ENCODE measurements at regions of chr4 and their contacts with region 1.

Region 1: DNA sequence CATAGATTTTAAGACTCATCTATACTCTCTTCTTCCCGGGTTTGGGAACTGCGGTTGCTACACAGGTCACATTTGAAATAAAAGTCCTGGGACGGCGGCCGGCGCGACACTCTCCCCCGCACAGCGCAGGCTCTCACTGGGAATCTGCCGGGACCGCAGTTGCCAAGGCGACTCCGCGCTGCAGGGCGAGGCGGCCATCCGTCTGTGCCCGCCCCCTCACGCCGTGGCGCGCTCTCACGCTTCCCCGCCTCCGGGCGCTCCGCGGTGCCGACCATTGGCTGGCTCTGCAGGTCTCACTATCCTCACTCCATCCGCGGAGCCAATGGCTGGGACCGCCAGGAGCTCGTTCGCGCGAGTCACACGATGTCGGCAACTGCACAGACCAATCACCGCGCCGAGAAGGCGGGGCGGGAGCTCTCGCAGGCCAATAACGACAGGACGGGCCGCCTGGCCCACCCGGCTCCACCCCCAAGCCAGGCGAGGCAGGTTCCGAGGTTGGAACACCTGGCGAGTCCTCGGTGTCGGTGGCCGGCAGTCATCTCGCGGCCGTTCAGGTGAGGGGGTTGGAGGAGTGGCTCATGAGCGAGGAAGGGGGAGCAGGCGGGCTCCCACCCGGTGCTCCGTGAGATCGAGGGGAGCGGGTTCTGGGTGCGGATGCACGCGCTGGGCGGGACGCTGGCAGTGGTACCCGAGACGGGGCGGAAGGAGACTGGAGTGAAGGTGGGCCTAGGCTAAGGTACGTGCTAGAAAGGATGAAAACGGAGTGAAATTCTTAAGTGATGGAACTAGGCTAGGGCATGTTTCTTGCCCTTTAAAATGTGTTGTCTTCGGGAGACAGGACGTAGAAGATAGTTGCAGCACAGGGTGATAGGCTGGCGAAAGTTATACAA is at the start of gene MSMO1:
- DNase-seq: peak; percentile 99
- H3K4me3 ChIP-seq: peak within 1 kb of the TSS; percentile 83
- H3K27ac ChIP-seq: peak within 1 kb of the TSS; percentile 81
- H3K4me1 ChIP-seq: peaks cover 23% of the 10 kb centered on the region
- H3K27me3 ChIP-seq: no peaks in the 10 kb centered on the region
- CTCF ChIP-seq: no peak
- total RNA-seq, gene MSMO1: 7.3 TPM

Region 2: DNA sequence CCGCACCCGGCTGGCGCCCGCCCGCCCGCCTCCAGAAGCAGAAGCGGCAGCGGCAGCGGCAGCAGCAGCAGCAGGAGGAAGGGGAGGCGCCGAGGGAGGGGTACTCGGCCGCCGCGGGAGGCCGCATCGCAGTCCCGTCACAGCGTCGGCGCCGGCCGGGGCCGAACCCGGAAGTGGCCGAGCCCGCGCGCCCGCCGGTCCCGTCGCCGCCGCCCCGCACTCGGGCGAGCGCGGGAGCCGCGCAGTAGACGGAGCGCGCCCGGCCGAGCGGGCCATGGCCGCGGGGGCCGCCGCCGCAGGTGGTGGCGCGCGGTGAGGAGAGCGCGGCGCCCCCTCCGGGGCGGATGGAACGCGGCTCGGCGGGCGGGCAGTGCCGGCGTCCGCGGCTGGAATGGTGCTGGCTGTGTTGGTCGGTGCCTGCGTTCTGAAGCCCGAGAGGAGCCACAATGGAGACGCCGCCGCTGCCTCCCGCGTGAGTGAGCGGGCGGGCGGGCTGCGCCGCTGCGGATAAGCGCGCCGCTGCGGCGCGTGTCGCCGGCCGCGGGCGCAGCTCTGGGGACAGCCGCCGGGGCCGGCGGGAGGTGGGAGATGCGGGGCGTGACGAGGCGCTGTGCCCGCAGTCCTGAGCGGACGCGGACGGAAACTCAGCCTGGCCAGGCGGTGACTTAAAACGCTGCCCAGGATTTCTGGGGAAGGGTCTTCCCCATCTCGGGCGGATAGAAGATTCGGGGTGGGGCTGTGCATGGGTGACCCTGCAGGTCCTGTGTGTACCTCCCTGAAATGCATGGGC is 119.8 kb before region 1 on chr4 and contains the start of gene KLHL2:
- intact Hi-C with region 1: loop called (anchors 10 kb)
- DNase-seq: peak; percentile 86
- H3K4me3 ChIP-seq: peak within 1 kb of the TSS; percentile 79
- H3K27ac ChIP-seq: peak within 1 kb of the TSS; percentile 92
- H3K4me1 ChIP-seq: peaks cover 36% of the 10 kb centered on the region
- H3K27me3 ChIP-seq: no peaks in the 10 kb centered on the region
- CTCF ChIP-seq: peak; percentile 14
- total RNA-seq, gene KLHL2: 8.4 TPM

Region 3: GRCh38 chr4:165537028-165537648 is 209.7 kb after region 1 on chr4:
- intact Hi-C with region 1: no loop called
- DNase-seq: no peak
- H3K4me3 ChIP-seq: no peak overlapping the region
- H3K27ac ChIP-seq: no peak overlapping the region
- H3K4me1 ChIP-seq: no peaks in the 10 kb centered on the region
- H3K27me3 ChIP-seq: no peaks in the 10 kb centered on the region
- CTCF ChIP-seq: peak; percentile 82